Posterior vena cava (tissue), 2 donors: ENCODE measurements at regions of chr3 and their contacts with region 1.

Region 1: GRCh38 chr3:197002701-197003454 is 26.7 kb downstream of the MELTF start:
- DNase-seq: peak; percentile 93

Region 2: GRCh38 chr3:197186887-197187588 is 184.2 kb after region 1 on chr3:
- intact Hi-C with region 1: loop called (anchors 10 kb)
- DNase-seq: no peak